Naive thymus-derived CD4-positive, alpha-beta T cell (primary cell): ENCODE measurements at regions of chr1 and their contacts with region 1.

Region 1: GRCh38 chr1:182391362-182392044 is at the start of gene GLUL:
- DNase-seq: peak; percentile 46 to 83 (median 63)
- ATAC-seq: peak; percentile 87
- H3K4me3 ChIP-seq: peak within 1 kb of the TSS; percentile 73
- H3K4me3 Mint-ChIP-seq: peak within 1 kb of the TSS; percentile 87 to 98 (median 94)
- H3K27ac ChIP-seq: peak within 1 kb of the TSS; percentile 64
- H3K27ac Mint-ChIP-seq: peak within 1 kb of the TSS; percentile 82 to 97 (median 89)
- H3K4me1 ChIP-seq: peaks cover 10 to 14% of the 10 kb centered on the region in 2 donors
- H3K4me1 Mint-ChIP-seq: peaks cover 17 to 45% (median 29%) of the 10 kb centered on the region in 7 donors
- H3K27me3 ChIP-seq: no peaks in the 10 kb centered on the region
- H3K27me3 Mint-ChIP-seq: peaks cover 0 to 25% (median 0%) of the 10 kb centered on the region in 5 donors
- total RNA-seq, gene GLUL: 66.2 to 357 (median 112) TPM

Region 2: DNA sequence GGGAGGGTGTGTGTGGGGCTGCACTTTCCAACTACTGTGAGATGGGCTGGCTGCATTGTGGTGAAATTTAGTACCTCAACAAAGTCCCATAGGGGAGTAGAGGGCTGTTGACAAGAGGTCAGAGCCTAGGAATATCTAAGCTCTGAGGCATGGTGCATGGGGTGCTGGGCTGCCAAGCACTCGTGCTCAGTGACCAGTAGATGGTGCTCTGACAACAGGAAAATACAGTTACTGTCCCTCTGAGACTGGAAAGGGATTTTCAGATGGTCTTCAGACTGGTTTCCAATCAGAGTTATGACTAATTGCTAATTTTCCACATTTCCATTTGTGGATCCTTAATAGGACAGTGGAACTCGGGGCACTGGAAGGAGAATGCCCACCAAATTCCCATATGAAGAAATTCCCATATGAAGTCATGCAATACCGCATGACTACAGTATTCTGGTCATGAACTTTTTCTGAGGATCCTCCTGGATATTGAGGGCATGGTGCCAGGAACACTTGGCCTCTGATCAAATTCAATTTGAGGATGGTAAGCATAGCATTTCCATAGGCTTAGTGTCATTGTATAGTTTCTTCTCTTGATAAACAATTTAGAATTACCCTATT is 912.3 kb before region 1 on chr1:
- CTCF ChIA-PET with region 1: interaction called, 3 read pairs
- POLR2A ChIA-PET with region 1: no interaction called
- intact Hi-C with region 1: loop called (anchors 1 to 10 kb)
- DNase-seq: peak in 5 of 9 donors; percentile 25 to 40 (median 26)
- ATAC-seq: peak; percentile 64
- H3K4me3 ChIP-seq: no peak overlapping the region
- H3K4me3 Mint-ChIP-seq: no peak overlapping the region
- H3K27ac ChIP-seq: no peak overlapping the region
- H3K27ac Mint-ChIP-seq: no peak overlapping the region
- H3K4me1 ChIP-seq: no peaks in the 10 kb centered on the region
- H3K4me1 Mint-ChIP-seq: peaks cover 9 to 16% (median 12%) of the 10 kb centered on the region in 7 donors
- H3K27me3 ChIP-seq: peaks cover 0 to 5% of the 10 kb centered on the region in 2 donors
- H3K27me3 Mint-ChIP-seq: peaks cover 34 to 58% (median 46%) of the 10 kb centered on the region in 5 donors

Region 3: DNA sequence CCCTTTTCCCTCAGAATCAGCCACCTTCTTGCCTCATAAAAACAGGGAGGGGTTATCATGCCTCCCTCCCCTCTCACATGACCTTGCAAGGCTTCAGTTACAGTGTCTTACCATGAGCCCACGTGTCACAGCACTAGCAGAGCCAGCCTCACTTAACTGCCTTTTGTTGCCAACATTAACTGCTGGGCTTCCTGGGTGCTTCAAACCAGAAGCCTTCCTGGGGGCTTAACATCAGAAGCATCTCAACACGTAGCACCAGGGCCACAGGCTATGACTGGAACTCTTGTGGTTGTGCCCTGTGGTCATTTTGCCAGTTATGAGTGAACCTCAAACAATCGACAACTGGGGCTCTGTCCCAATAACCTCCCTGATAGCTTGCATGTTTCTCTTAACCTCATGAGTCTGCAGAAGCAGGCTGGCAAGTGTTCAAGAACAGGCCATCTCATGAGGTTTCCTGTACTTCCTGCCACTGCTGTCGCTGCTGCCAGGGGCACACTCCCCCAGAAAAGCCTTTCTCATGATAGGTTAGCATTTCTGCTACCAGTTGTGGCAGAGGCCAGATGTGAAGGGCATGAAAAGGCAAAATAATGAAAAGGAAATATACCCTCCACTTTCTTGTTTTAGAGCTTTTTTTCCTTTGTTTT is 132.2 kb before region 1 on chr1:
- CTCF ChIA-PET with region 1: interaction called, 4 read pairs
- POLR2A ChIA-PET with region 1: no interaction called
- intact Hi-C with region 1: loop called in 1 of 2 experiments (anchors 1 kb)
- DNase-seq: peak; percentile 21 to 79 (median 65)
- ATAC-seq: peak; percentile 90
- H3K4me3 ChIP-seq: peak overlapping the region; percentile 2
- H3K4me3 Mint-ChIP-seq: peak overlapping the region; percentile 28 to 82 (median 75)
- H3K27ac ChIP-seq: peak overlapping the region; percentile 72
- H3K27ac Mint-ChIP-seq: peak overlapping the region; percentile 83 to 97 (median 91)
- H3K4me1 ChIP-seq: peaks cover 11 to 20% of the 10 kb centered on the region in 2 donors
- H3K4me1 Mint-ChIP-seq: peaks cover 23 to 50% (median 43%) of the 10 kb centered on the region in 7 donors
- H3K27me3 ChIP-seq: no peaks in the 10 kb centered on the region
- H3K27me3 Mint-ChIP-seq: no peaks in the 10 kb centered on the region

Region 4: GRCh38 chr1:182301467-182302198 is 89.9 kb before region 1 on chr1:
- CTCF ChIA-PET with region 1: no interaction called
- POLR2A ChIA-PET with region 1: interaction called, 4 read pairs
- intact Hi-C with region 1: loop called (anchors 2 to 5 kb)
- DNase-seq: peak in 5 of 9 donors; percentile 17 to 31 (median 27)
- ATAC-seq: peak; percentile 26
- H3K4me3 ChIP-seq: no peak overlapping the region
- H3K4me3 Mint-ChIP-seq: no peak overlapping the region
- H3K27ac ChIP-seq: peak overlapping the region; percentile 20
- H3K27ac Mint-ChIP-seq: peak overlapping the region in 8 of 9 donors; percentile 15 to 94 (median 64)
- H3K4me1 ChIP-seq: peaks cover 0 to 6% of the 10 kb centered on the region in 2 donors
- H3K4me1 Mint-ChIP-seq: peaks cover 17 to 31% (median 28%) of the 10 kb centered on the region in 7 donors
- H3K27me3 ChIP-seq: no peaks in the 10 kb centered on the region
- H3K27me3 Mint-ChIP-seq: no peaks in the 10 kb centered on the region

Region 5: GRCh38 chr1:182357913-182358312 is 33.6 kb before region 1 on chr1:
- CTCF ChIA-PET with region 1: interaction called, 3 read pairs
- POLR2A ChIA-PET with region 1: no interaction called
- intact Hi-C with region 1: loop called in 1 of 2 experiments (anchors 5 kb)
- DNase-seq: no peak
- ATAC-seq: no peak
- H3K4me3 ChIP-seq: no peak overlapping the region
- H3K4me3 Mint-ChIP-seq: no peak overlapping the region
- H3K27ac ChIP-seq: no peak overlapping the region
- H3K27ac Mint-ChIP-seq: no peak overlapping the region
- H3K4me1 ChIP-seq: no peaks in the 10 kb centered on the region
- H3K4me1 Mint-ChIP-seq: no peaks in the 10 kb centered on the region
- H3K27me3 ChIP-seq: no peaks in the 10 kb centered on the region
- H3K27me3 Mint-ChIP-seq: peaks cover 0 to 16% (median 0%) of the 10 kb centered on the region in 5 donors

Region 6: DNA sequence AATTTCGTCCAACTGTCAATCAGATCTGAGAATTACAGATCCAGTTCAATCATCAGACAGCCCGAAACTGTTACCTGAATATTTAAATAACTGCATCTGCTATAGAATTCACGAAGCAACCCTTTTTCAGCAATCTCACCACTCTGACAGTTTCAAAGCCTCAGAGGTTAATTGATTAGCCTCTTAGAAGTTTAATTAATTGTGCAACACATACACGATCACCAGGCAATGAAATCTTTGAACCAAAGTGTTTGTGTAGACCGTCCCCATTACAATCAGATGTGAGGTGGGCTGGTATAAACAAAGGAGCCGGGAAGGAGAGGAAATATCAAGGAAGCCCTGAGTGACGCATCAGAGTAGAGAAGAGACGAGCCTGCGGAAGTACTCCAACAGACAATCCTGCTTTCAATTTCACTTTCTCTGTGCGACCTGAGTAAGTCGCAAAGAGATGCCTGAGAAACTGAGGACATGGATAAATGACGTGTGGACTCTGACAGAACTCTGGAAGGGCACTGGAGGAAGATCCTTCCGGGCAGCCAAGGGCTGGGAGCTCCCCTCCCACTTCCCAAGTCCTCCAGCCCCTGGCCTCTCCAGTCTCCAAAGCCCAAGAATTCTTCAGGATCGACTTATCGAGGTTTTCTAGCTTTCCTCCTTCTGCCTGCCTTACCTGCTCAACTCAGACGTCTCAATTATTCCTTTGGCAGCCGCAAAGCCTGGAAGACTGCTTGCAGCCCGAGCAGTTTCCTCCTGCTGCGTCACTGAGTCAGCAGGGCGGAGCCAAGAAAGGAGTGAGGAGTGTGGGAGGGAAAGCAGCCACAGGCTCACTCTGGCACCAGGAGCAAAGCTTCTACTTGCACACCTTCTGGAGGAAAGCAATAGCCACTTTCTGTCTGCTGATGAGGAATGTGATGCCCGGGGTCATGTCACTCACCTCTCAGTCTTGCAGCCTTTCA is 197.3 kb after region 1 on chr1 and contains the start of gene RNASEL:
- CTCF ChIA-PET with region 1: interaction called, 3 read pairs
- POLR2A ChIA-PET with region 1: no interaction called
- intact Hi-C with region 1: loop called (anchors 5 kb)
- DNase-seq: peak; percentile 24 to 72 (median 65)
- ATAC-seq: peak; percentile 89
- H3K4me3 ChIP-seq: peak within 1 kb of the TSS; percentile 92
- H3K4me3 Mint-ChIP-seq: peak within 1 kb of the TSS; percentile 93 to 99 (median 98)
- H3K27ac ChIP-seq: peak within 1 kb of the TSS; percentile 97
- H3K27ac Mint-ChIP-seq: peak within 1 kb of the TSS; percentile 97 to 100 (median 99)
- H3K4me1 ChIP-seq: peaks cover 23 to 27% of the 10 kb centered on the region in 2 donors
- H3K4me1 Mint-ChIP-seq: peaks cover 31 to 60% (median 51%) of the 10 kb centered on the region in 7 donors
- H3K27me3 ChIP-seq: no peaks in the 10 kb centered on the region
- H3K27me3 Mint-ChIP-seq: peaks cover 0 to 9% (median 0%) of the 10 kb centered on the region in 5 donors
- total RNA-seq, gene RNASEL: 5.7 to 34.9 (median 12.1) TPM

Region 7: DNA sequence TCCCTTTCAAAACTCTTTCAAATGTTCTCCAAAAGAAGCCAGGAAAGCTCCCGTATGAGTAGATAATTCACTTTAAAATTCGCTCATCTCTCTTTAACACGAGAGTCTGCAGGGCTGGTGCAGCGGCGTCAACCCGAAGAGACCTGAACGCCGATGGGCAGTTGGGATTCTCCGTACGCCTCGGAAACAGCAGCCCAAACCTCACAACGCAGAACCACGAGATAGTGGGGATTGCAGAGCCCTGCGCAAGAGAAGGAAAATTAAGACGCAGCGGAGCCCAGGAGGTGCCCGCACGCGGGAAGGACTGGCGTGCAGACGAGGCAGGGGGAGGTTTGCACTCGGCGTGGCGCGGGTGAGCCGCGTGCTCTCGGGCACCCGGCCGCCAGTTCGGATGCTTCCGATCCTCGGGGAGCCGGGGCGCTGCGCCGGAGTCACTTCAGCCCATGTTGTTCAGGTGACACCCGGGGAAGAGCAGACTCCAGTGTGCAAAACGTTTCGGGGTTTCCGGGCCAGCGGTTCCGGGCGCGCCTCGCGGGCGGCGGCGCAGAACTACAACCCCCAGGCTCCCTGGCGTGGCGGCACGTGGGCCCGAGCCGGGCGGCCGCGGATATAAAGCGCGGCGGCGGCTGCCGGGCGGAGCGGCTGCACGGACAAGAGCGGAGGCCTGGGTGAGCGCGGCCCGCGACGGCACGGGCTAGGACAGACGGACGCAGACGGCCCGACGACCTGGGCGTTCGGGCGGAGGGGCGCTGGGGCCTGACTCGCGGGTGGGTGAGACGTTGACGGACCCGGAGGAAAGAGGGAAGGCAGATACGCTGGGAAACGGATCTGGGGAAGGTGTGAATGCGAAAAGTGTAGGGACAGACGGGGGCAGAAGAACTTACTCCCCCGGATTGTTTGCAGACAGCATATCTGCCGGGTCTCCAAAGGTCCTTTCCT is 397.9 kb after region 1 on chr1 and contains the start of gene NPL:
- CTCF ChIA-PET with region 1: no interaction called
- POLR2A ChIA-PET with region 1: no interaction called
- intact Hi-C with region 1: loop called (anchors 1 to 5 kb)
- DNase-seq: peak; percentile 78 to 88 (median 86)
- ATAC-seq: peak; percentile 97
- H3K4me3 ChIP-seq: peak within 1 kb of the TSS; percentile 94
- H3K4me3 Mint-ChIP-seq: peak within 1 kb of the TSS; percentile 88 to 96 (median 94)
- H3K27ac ChIP-seq: peak within 1 kb of the TSS; percentile 68
- H3K27ac Mint-ChIP-seq: peak within 1 kb of the TSS; percentile 45 to 94 (median 87)
- H3K4me1 ChIP-seq: peaks cover 8 to 13% of the 10 kb centered on the region in 2 donors
- H3K4me1 Mint-ChIP-seq: peaks cover 8 to 18% (median 15%) of the 10 kb centered on the region in 7 donors
- H3K27me3 ChIP-seq: no peaks in the 10 kb centered on the region
- H3K27me3 Mint-ChIP-seq: peaks cover 0 to 38% (median 0%) of the 10 kb centered on the region in 5 donors
- total RNA-seq, gene NPL: 3.0 to 20.8 (median 9.9) TPM